PC-9 (cell line): ENCODE measurements at regions of chr9 and their contacts with region 1.

Region 1: GRCh38 chr9:116149844-116150243 is 3.7 kb upstream of the PAPPA start:
- DNase-seq: no peak
- H3K4me3 ChIP-seq: no peak overlapping the region
- H3K27ac ChIP-seq: no peak overlapping the region
- H3K4me1 ChIP-seq: peaks cover 11% of the 10 kb centered on the region
- H3K27me3 ChIP-seq: no peaks in the 10 kb centered on the region
- CTCF ChIP-seq: peak; percentile 72

Region 2: DNA sequence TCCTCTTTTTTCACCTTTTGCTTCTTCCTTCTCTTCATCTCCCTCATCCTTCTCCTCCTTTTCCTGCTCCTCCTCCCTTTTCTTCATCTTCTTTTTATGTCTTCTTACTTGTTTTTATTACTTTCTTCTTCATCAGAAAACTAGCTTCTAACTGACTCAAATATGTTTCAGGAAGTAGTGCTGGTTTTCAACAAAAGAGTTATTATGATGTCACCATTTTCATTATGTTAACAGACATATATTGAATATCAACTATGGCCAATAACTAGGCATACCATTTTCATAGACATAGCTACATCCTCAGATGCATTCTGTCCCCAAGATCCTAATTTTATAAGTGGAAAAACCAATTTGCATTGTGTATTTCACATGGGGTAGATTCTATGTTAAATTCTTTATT is 249.1 kb before region 1 on chr9:
- CTCF ChIA-PET with region 1: no interaction called
- POLR2A ChIA-PET with region 1: no interaction called
- intact Hi-C with region 1: no loop called
- DNase-seq: no peak
- H3K4me3 ChIP-seq: no peak overlapping the region
- H3K27ac ChIP-seq: no peak overlapping the region
- H3K4me1 ChIP-seq: no peaks in the 10 kb centered on the region
- H3K27me3 ChIP-seq: no peaks in the 10 kb centered on the region
- CTCF ChIP-seq: no peak

Region 3: GRCh38 chr9:116008278-116008677 is 141.6 kb before region 1 on chr9:
- CTCF ChIA-PET with region 1: interaction called, 3 read pairs
- POLR2A ChIA-PET with region 1: interaction called, 3 read pairs
- intact Hi-C with region 1: loop called (anchors 2 kb)
- DNase-seq: peak; percentile 74 to 93
- H3K4me3 ChIP-seq: peak overlapping the region; percentile 17; the same call in 1 of the 2 replicates
- H3K27ac ChIP-seq: peak overlapping the region; percentile 84
- H3K4me1 ChIP-seq: peaks cover 55% of the 10 kb centered on the region
- H3K27me3 ChIP-seq: no peaks in the 10 kb centered on the region
- CTCF ChIP-seq: no peak

Region 4: DNA sequence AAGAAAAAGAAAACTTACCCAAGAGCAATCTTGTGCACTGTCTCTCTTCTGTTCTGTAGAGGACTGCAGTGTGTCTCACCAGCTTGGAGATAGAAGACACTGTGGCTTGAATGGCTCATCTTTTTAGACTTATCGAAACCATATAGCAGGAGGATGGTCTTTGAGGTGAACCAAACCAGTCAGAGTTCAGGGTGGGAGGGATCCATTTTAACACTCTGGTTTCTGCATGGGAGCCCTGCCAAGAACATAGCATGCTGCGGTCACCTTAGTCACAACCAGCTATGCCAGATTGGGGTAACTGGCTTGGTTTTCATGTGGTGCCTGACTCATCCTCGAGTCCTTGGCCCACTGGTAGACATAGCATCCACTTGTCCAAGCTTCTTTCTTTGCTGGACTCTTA is 138.8 kb after region 1 on chr9:
- CTCF ChIA-PET with region 1: no interaction called
- POLR2A ChIA-PET with region 1: no interaction called
- intact Hi-C with region 1: loop called (anchors 10 kb)
- DNase-seq: peak; percentile 66 to 69
- H3K4me3 ChIP-seq: no peak overlapping the region
- H3K27ac ChIP-seq: no peak overlapping the region
- H3K4me1 ChIP-seq: no peaks in the 10 kb centered on the region
- H3K27me3 ChIP-seq: no peaks in the 10 kb centered on the region
- CTCF ChIP-seq: no peak

Region 5: DNA sequence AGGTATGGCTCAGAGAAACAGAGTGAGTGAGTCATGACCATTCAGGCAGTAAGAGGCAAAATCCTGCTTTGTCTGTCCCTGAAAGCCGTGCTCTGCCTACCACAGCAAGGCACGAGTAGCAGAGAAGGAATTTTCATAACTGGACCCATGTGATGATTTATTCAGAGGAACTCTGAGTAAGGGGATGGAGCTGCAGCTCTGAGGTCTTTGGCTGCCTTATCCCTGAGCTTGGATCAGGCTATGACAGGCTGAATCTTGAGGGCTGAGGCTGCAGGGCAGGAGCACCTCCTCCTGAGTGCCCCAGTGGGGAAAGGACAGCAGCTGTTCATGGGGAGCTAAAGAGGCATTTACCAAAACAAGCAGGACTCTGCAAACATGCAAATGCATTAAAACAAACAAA is 187.2 kb after region 1 on chr9:
- CTCF ChIA-PET with region 1: no interaction called
- POLR2A ChIA-PET with region 1: interaction called, 4 read pairs
- intact Hi-C with region 1: loop called (anchors 10 kb)
- DNase-seq: no peak
- H3K4me3 ChIP-seq: no peak overlapping the region
- H3K27ac ChIP-seq: no peak overlapping the region
- H3K4me1 ChIP-seq: no peaks in the 10 kb centered on the region
- H3K27me3 ChIP-seq: no peaks in the 10 kb centered on the region
- CTCF ChIP-seq: no peak

Region 6: GRCh38 chr9:116482740-116483139 is 332.9 kb after region 1 on chr9:
- CTCF ChIA-PET with region 1: no interaction called
- POLR2A ChIA-PET with region 1: no interaction called
- intact Hi-C with region 1: loop called (anchors 5 kb)
- DNase-seq: peak in 1 of 2 experiments; percentile 51
- H3K4me3 ChIP-seq: no peak overlapping the region
- H3K27ac ChIP-seq: no peak overlapping the region
- H3K4me1 ChIP-seq: no peaks in the 10 kb centered on the region
- H3K27me3 ChIP-seq: no peaks in the 10 kb centered on the region
- CTCF ChIP-seq: no peak

Region 7: GRCh38 chr9:116572095-116572748 is 422.4 kb after region 1 on chr9:
- CTCF ChIA-PET with region 1: no interaction called
- POLR2A ChIA-PET with region 1: no interaction called
- intact Hi-C with region 1: loop called (anchors 1 kb)
- DNase-seq: peak; percentile 57 to 75
- H3K4me3 ChIP-seq: no peak overlapping the region
- H3K27ac ChIP-seq: no peak overlapping the region
- H3K4me1 ChIP-seq: peaks cover 15% of the 10 kb centered on the region; the same call in 1 of the 2 replicates
- H3K27me3 ChIP-seq: no peaks in the 10 kb centered on the region
- CTCF ChIP-seq: peak; percentile 94

Region 8: GRCh38 chr9:116646661-116647512 is 497.0 kb after region 1 on chr9:
- CTCF ChIA-PET with region 1: no interaction called
- POLR2A ChIA-PET with region 1: no interaction called
- intact Hi-C with region 1: loop called (anchors 5 kb)
- DNase-seq: peak in 1 of 2 experiments; percentile 7
- H3K4me3 ChIP-seq: no peak overlapping the region
- H3K27ac ChIP-seq: no peak overlapping the region
- H3K4me1 ChIP-seq: no peaks in the 10 kb centered on the region
- H3K27me3 ChIP-seq: no peaks in the 10 kb centered on the region
- CTCF ChIP-seq: peak; percentile 72